Lower leg skin (tissue), 4 donors: ENCODE measurements at regions of chr19 and their contacts with region 1.

Region 1: DNA sequence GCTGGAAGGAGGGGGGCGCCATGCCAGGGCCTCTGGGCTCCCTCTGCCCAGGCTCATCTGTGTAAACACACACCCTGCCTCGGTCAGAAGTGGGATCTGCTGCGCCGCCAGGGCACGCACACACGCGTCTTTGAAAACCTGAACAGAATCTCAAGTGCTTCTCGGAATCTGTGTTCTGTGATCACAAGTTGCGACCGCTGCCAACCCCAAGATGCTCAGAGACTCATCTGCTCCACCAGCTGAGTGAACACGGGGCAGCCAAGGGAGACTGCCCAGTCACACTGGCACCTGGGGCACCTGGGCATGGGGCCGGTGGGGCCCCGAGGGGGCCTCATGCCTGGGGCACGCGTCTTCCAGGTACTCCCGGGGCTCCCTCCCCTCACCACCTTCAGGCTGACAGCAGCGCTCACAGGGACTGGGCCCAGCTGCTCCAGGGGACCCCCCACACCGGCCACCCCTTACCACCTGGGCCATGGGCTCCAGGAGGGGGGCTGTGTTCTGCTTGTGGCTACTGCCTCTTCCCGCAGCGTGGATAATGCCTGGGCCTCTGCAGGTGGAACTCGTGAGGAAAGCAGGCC is 59.0 kb downstream of the KLF2 start:
- DNase-seq: no peak
- H3K4me3 ChIP-seq: no peak overlapping the region
- CTCF ChIP-seq: no peak
- POLR2A ChIP-seq: no peak

Region 2: DNA sequence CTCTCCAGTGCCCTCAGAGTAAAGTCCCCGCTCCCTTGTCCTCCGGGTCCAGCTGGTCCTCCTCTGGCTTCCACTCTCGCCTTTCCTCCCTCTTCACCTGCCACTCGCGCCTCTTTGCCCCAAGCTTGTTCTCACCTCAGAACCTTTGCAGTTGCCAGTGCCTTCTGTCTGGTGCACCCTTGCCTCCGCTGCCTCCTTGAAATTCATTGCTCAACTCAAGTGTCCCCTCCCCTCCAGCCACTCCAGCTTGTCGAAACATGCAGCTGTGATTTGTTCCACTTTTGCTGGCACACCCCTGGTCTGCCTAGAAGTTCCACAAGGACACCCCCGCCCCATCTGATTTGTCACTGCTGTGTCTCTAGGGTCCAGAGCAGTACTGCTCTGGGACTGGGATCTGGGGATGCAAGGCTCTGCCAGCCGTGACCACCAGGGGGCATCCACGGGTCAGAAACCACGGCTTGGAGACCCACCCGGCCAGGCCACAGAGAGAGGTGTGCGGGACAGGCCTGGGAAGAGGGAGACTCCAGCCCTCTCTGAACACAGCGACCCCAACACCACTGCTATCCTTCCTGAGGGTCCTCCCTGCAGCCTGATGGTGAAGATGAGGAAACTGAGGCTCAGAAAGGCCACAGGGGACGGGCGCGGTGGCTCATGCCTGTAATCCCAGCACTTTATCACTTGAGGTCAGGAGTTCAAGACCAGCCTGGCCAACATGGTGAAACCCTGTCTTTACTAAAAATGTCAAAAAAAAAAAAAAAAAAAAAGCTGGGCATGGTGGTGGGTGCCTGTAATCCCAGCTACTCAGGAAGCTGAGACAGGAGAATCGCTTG is 136.1 kb before region 1 on chr19:
- intact Hi-C with region 1: loop called (anchors 2 kb)
- DNase-seq: peak; percentile 78 to 98
- H3K4me3 ChIP-seq: no peak overlapping the region
- CTCF ChIP-seq: peak in 1 of 3 donors; percentile 95
- POLR2A ChIP-seq: no peak